Activated CD4-positive, alpha-beta T cell treated with anti-CD3 and anti-CD28 coated beads for 36 hours (primary cell): ENCODE measurements at regions of chrX and their contacts with region 1.

Region 1: DNA sequence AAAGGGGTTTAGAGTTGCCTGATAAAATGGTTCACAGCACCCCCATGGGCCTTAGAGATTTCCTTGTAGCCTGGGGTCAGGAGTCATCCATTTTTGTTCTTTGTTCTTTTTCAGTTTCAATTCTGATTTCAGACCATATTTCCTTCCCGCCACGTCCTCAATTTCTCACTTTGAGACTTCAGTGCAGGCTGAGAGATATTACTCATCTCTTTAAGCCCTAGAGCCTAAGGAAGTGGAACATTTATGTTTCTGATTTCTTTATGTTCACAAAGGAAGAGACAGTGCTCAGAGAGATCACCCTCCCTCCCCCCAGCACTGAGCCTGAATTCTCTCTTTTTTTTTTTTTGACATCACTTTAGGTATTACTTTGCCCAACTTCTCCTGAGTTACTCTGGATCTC is 56.3 kb downstream of the MSN start:
- DNase-seq: peak; percentile 60
- ATAC-seq: peak; percentile 86
- H3K4me3 Mint-ChIP-seq: peak overlapping the region; percentile 19
- H3K27ac Mint-ChIP-seq: peak overlapping the region; percentile 88
- H3K4me1 Mint-ChIP-seq: peaks cover 87% of the 10 kb centered on the region
- H3K27me3 Mint-ChIP-seq: no peaks in the 10 kb centered on the region

Region 2: GRCh38 chrX:65697915-65698796 is 25.6 kb before region 1 on chrX:
- CTCF ChIA-PET with region 1: interaction called, 6 read pairs
- POLR2A ChIA-PET with region 1: interaction called, 3 read pairs
- intact Hi-C with region 1: loop called in 1 of 2 experiments (anchors 2 kb)
- DNase-seq: peak; percentile 83
- ATAC-seq: peak; percentile 76
- H3K4me3 Mint-ChIP-seq: peak overlapping the region; percentile 48
- H3K27ac Mint-ChIP-seq: peak overlapping the region; percentile 98
- H3K4me1 Mint-ChIP-seq: peaks cover 87% of the 10 kb centered on the region
- H3K27me3 Mint-ChIP-seq: no peaks in the 10 kb centered on the region

Region 3: GRCh38 chrX:65706041-65706828 is 17.5 kb before region 1 on chrX:
- CTCF ChIA-PET with region 1: interaction called, 11 read pairs
- POLR2A ChIA-PET with region 1: interaction called, 3 read pairs
- intact Hi-C with region 1: loop called (anchors 1 kb)
- DNase-seq: peak; percentile 81
- ATAC-seq: peak; percentile 86
- H3K4me3 Mint-ChIP-seq: peak overlapping the region; percentile 44
- H3K27ac Mint-ChIP-seq: peak overlapping the region; percentile 91
- H3K4me1 Mint-ChIP-seq: peaks cover 68% of the 10 kb centered on the region
- H3K27me3 Mint-ChIP-seq: no peaks in the 10 kb centered on the region

Region 4: GRCh38 chrX:65932176-65933084 is 208.7 kb after region 1 on chrX:
- CTCF ChIA-PET with region 1: no interaction called
- POLR2A ChIA-PET with region 1: no interaction called
- intact Hi-C with region 1: loop called in 1 of 2 experiments (anchors 1 kb)
- DNase-seq: peak; percentile 57
- ATAC-seq: peak; percentile 98
- H3K4me3 Mint-ChIP-seq: no peak overlapping the region
- H3K27ac Mint-ChIP-seq: peak overlapping the region; percentile 53
- H3K4me1 Mint-ChIP-seq: peaks cover 13% of the 10 kb centered on the region
- H3K27me3 Mint-ChIP-seq: no peaks in the 10 kb centered on the region

Region 5: GRCh38 chrX:66602381-66602938 is 878.8 kb after region 1 on chrX:
- CTCF ChIA-PET with region 1: no interaction called
- POLR2A ChIA-PET with region 1: no interaction called
- intact Hi-C with region 1: no loop called
- DNase-seq: no peak
- ATAC-seq: no peak
- H3K4me3 Mint-ChIP-seq: no peak overlapping the region
- H3K27ac Mint-ChIP-seq: no peak overlapping the region
- H3K4me1 Mint-ChIP-seq: no peaks in the 10 kb centered on the region
- H3K27me3 Mint-ChIP-seq: no peaks in the 10 kb centered on the region